ENCODE measurements at regions of chr3 and their contacts with region 1.

Region 1: GRCh38 chr3:188954590-188955208 is 217.1 kb upstream of the TPRG1 start:
- DNase-seq: peak; percentile 87 to 92
- ATAC-seq: peak; percentile 88
- H3K4me3 ChIP-seq: no peak overlapping the region
- H3K27ac ChIP-seq: no peak overlapping the region
- H3K4me1 ChIP-seq: peaks cover 7 to 10% of the 10 kb centered on the region in 2 donors
- H3K27me3 ChIP-seq: no peaks in the 10 kb centered on the region

Region 2: DNA sequence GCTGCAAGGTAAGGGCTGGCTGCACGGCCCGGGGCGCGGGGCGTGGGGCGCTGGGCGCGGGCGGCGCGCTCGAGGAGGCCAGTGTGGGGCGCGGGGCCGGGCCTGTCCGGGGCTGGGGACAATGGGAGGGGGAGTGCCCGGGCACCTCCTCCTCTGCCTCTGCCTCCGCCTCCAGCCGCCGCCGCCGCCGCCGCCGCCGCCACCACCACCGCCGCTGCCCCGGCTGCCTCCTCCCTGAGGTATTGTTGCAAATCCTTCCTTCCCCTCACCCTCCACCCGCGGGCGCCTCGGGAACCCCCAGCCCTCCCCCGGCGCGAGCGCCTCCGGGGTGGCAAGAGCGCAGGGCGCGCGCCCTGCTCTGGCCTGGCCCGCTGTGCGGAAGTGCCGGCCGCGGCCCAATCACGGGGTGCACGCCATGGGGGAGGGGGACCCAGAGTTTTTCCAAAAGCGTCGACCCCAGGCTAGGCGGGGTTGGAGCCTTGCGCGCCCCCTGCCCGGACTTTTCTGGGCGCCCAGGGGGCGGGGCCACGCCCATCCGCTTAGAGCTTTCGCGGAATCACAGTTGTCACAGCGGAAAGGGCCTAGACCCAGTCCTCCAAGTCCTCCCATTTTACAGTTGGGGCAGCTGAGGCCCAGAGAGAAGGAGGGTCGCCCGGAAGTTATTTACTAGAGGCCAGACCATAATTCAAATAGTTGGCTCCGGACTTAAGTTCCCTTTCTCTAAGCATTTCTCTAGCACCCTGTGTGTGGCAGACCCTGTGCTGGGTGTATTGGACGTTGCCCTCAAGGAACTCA is 800.5 kb before region 1 on chr3 and contains the start of gene LPP:
- intact Hi-C with region 1: loop called in 1 of 2 experiments (anchors 10 kb)
- DNase-seq: peak; percentile 90 to 92
- ATAC-seq: peak; percentile 88
- H3K4me3 ChIP-seq: peak within 1 kb of the TSS; percentile 29 to 77
- H3K27ac ChIP-seq: peak within 1 kb of the TSS; percentile 98 to 99
- H3K4me1 ChIP-seq: peaks cover 3 to 8% of the 10 kb centered on the region in 2 donors
- H3K27me3 ChIP-seq: no peaks in the 10 kb centered on the region
- total RNA-seq, gene LPP: 995 to 2,536 TPM

Region 3: GRCh38 chr3:188286087-188286513 is 668.6 kb before region 1 on chr3:
- intact Hi-C with region 1: loop called in 1 of 2 experiments (anchors 10 kb)
- DNase-seq: peak in 1 of 2 donors; percentile 75
- ATAC-seq: peak; percentile 88
- H3K4me3 ChIP-seq: no peak overlapping the region
- H3K27ac ChIP-seq: peak overlapping the region; percentile 64 to 80
- H3K4me1 ChIP-seq: peaks cover 10 to 30% of the 10 kb centered on the region in 2 donors
- H3K27me3 ChIP-seq: no peaks in the 10 kb centered on the region

Region 4: GRCh38 chr3:188929137-188929536 is 25.6 kb before region 1 on chr3:
- intact Hi-C with region 1: no loop called
- DNase-seq: no peak
- ATAC-seq: no peak
- H3K4me3 ChIP-seq: no peak overlapping the region
- H3K27ac ChIP-seq: no peak overlapping the region
- H3K4me1 ChIP-seq: peaks cover 3 to 8% of the 10 kb centered on the region in 2 donors
- H3K27me3 ChIP-seq: no peaks in the 10 kb centered on the region

Region 5: DNA sequence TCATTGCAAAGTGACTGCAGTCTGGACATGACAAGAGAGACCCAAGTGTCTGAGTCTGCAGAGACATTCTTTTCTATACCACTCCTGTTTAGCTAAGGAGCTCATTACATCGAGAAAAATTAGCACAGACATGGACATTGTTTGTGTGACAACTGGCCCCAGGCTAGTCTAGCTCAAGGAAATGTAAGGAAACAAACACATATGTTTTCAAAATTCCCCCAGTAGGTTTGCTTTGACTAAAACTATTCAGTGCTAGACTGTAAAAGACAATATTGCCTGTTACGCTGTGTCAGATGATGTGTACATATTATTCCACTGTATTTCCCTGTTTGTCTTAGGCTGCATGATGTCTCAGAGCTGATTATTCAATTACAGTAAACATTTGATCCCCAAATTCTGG is 258.0 kb after region 1 on chr3:
- intact Hi-C with region 1: no loop called
- DNase-seq: no peak
- ATAC-seq: no peak
- H3K4me3 ChIP-seq: no peak overlapping the region
- H3K27ac ChIP-seq: no peak overlapping the region
- H3K4me1 ChIP-seq: no peaks in the 10 kb centered on the region
- H3K27me3 ChIP-seq: no peaks in the 10 kb centered on the region